B cell (primary cell): ENCODE measurements at regions of chr2 and their contacts with region 1.

Region 1: GRCh38 chr2:25041928-25042320 is at the start of gene EFR3B:
- DNase-seq: peak; percentile 92
- ATAC-seq: peak; percentile 98
- H3K4me3 ChIP-seq: peak within 1 kb of the TSS; percentile 13 to 76 (median 52)
- H3K4me3 Mint-ChIP-seq: peak within 1 kb of the TSS; percentile 91
- H3K27ac ChIP-seq: no peak within 1 kb of the TSS
- H3K27ac Mint-ChIP-seq: no peak within 1 kb of the TSS
- H3K4me1 ChIP-seq: peaks cover 23 to 30% of the 10 kb centered on the region in 2 donors
- H3K4me1 Mint-ChIP-seq: peaks cover 28% of the 10 kb centered on the region
- H3K27me3 ChIP-seq: peaks cover 0 to 44% (median 24%) of the 10 kb centered on the region in 4 experiments
- H3K27me3 Mint-ChIP-seq: peaks cover 47% of the 10 kb centered on the region
- CTCF ChIP-seq: no peak
- total RNA-seq, gene EFR3B: 0.12 and 0.15 TPM in 2 replicates

Region 2: GRCh38 chr2:24490674-24491625 is 551.0 kb before region 1 on chr2 and contains the start of gene NCOA1:
- CTCF ChIA-PET with region 1: no interaction called
- POLR2A ChIA-PET with region 1: no interaction called
- intact Hi-C with region 1: loop called (anchors 5 kb)
- DNase-seq: peak; percentile 92
- ATAC-seq: peak; percentile 80
- H3K4me3 ChIP-seq: peak within 1 kb of the TSS; percentile 65 to 83 (median 67)
- H3K4me3 Mint-ChIP-seq: peak within 1 kb of the TSS; percentile 95
- H3K27ac ChIP-seq: peak within 1 kb of the TSS; percentile 76 to 79
- H3K27ac Mint-ChIP-seq: peak within 1 kb of the TSS; percentile 96
- H3K4me1 ChIP-seq: peaks cover 22 to 23% of the 10 kb centered on the region in 2 donors
- H3K4me1 Mint-ChIP-seq: peaks cover 43% of the 10 kb centered on the region
- H3K27me3 ChIP-seq: no peaks in the 10 kb centered on the region
- H3K27me3 Mint-ChIP-seq: no peaks in the 10 kb centered on the region
- CTCF ChIP-seq: no peak
- total RNA-seq, gene NCOA1: 48.5 and 49.1 TPM in 2 replicates

Region 3: GRCh38 chr2:24792874-24793760 is 248.8 kb before region 1 on chr2 and contains the starts of genes CENPO and PTRHD1:
- CTCF ChIA-PET with region 1: no interaction called
- POLR2A ChIA-PET with region 1: no interaction called
- intact Hi-C with region 1: loop called (anchors 5 kb)
- DNase-seq: peak; percentile 99
- ATAC-seq: peak; percentile 96
- H3K4me3 ChIP-seq: peak within 1 kb of the TSS; percentile 51 to 91 (median 82)
- H3K4me3 Mint-ChIP-seq: peak within 1 kb of the TSS; percentile 99
- H3K27ac ChIP-seq: peak within 1 kb of the TSS; percentile 84 to 87
- H3K27ac Mint-ChIP-seq: peak within 1 kb of the TSS; percentile 100
- H3K4me1 ChIP-seq: peaks cover 10 to 16% of the 10 kb centered on the region in 2 donors
- H3K4me1 Mint-ChIP-seq: peaks cover 19% of the 10 kb centered on the region
- H3K27me3 ChIP-seq: no peaks in the 10 kb centered on the region
- H3K27me3 Mint-ChIP-seq: no peaks in the 10 kb centered on the region
- CTCF ChIP-seq: peak; percentile 68
- total RNA-seq, gene CENPO: 10.4 and 10.8 TPM in 2 replicates
- total RNA-seq, gene PTRHD1: 20.2 and 20.4 TPM in 2 replicates

Region 4: DNA sequence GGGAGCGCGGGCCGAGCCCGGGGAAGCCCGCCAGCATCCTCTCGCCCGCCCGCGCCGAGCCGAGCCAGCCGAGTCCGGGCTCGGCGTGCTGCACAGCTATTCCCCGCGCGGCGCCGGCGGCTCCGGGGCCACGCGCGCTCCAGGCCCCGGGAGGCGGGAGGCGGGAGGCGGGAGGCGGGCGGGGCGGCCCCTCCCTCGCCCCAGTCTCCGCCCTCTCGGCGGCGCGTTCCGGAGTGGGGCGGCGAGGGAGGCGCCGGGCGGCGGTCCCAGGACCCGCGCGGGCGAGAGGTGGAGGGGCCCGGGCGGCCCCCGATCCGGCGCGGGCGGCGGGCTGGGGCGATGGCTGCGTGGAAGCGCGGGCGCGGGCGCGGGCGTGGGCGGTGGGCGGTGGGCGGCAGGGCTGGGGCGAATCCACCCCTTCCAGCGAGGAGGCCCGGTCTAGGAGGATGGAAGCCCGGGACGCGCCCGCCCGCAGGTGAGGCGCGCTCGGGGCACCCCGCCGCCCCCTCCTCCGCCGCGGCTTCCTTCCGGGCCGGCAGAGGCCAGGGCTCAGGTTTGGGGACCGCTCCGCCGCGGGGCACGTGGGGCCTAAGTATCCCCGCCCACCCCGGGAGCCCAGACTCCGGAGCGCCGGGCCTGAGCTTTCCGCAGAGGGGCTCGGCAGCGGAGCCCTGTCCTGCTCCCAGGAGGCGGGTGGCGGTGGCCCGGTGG is 121.7 kb before region 1 on chr2 and contains the start of gene ADCY3:
- CTCF ChIA-PET with region 1: no interaction called
- POLR2A ChIA-PET with region 1: no interaction called
- intact Hi-C with region 1: loop called (anchors 1 kb)
- DNase-seq: peak; percentile 73
- ATAC-seq: peak; percentile 79
- H3K4me3 ChIP-seq: peak within 1 kb of the TSS; percentile 23 to 66 (median 56)
- H3K4me3 Mint-ChIP-seq: peak within 1 kb of the TSS; percentile 94
- H3K27ac ChIP-seq: no peak within 1 kb of the TSS
- H3K27ac Mint-ChIP-seq: peak within 1 kb of the TSS; percentile 79
- H3K4me1 ChIP-seq: peaks cover 10 to 16% of the 10 kb centered on the region in 2 donors
- H3K4me1 Mint-ChIP-seq: peaks cover 23% of the 10 kb centered on the region
- H3K27me3 ChIP-seq: no peaks in the 10 kb centered on the region
- H3K27me3 Mint-ChIP-seq: no peaks in the 10 kb centered on the region
- CTCF ChIP-seq: no peak
- total RNA-seq, gene ADCY3: 48.2 and 48.4 TPM in 2 replicates

Region 5: DNA sequence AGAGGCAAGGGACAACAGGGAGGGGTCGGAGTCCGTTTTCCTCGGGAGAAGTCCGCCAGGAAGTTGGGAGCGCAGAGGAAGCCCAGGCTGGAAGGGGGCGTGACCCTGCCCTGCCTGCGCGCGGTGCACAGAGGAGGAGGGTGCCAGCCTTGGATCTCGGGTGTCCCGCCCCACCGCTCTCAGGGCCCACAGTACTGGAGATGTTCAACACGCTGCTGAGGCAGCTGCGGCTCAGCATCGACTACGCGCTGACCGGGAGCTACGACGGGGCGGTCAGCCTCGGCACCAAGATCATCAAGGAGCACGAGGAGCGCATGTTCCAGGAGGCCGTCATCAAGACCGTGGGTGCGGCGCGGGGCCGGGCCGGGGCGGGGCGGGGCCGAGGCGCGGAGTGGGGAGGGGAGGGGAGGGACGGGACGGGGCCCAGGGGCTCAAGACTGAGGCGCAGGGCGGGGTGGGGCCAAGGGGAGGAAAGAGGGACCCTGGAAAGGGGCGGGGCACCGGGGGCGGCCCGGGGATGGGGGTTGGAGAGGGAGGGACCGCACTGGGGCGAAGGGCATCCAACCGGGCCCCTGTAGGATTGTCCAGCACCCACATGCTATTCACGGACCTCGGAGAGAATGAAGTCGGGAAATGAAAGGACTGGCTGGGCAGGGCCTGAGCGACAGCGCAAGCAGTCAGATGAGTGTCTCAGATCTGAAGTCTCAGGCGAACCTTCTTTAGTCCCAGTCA is 89.8 kb after region 1 on chr2:
- CTCF ChIA-PET with region 1: interaction called, 3 read pairs
- POLR2A ChIA-PET with region 1: no interaction called
- intact Hi-C with region 1: loop called (anchors 5 kb)
- DNase-seq: peak; percentile 42
- ATAC-seq: no peak
- H3K4me3 ChIP-seq: peak overlapping the region in 3 of 5 experiments; percentile 8 to 39 (median 23)
- H3K4me3 Mint-ChIP-seq: peak overlapping the region; percentile 81
- H3K27ac ChIP-seq: no peak overlapping the region
- H3K27ac Mint-ChIP-seq: no peak overlapping the region
- H3K4me1 ChIP-seq: peaks cover 11 to 18% of the 10 kb centered on the region in 2 donors
- H3K4me1 Mint-ChIP-seq: peaks cover 16% of the 10 kb centered on the region
- H3K27me3 ChIP-seq: peaks cover 0 to 41% (median 22%) of the 10 kb centered on the region in 4 experiments
- H3K27me3 Mint-ChIP-seq: peaks cover 53% of the 10 kb centered on the region
- CTCF ChIP-seq: no peak

Region 6: DNA sequence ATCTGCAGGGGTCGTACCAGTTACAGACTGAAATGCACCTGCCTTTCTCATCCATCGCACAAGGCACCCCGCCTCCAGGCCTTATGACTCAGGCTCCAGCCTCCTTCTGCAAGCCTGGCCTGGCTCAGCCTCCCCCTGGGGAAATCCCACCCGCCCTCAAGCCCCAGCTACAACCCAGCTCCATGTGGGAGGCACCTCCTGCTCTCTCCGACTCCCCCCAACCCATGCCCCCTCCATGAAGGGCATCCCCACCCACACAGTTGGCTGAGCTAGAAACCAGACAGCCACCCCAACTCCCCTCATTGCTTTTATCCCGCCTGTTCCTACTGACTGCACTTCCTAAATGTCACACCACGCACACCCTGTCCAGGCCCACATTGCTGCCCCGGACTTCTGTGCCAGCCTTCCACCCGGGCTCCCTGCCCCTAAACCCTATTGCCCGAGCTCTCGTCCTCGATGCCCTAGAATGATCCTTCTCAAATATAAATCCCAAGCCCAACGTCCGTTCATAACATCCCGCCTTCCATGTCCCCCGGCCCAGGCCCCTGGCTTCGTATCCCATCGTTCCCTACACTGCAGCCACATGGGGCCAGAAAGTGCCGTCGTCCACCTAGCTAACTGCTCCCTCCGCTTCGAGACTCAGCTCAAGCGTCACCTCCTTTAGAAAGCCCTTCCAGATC is 289.9 kb after region 1 on chr2:
- CTCF ChIA-PET with region 1: no interaction called
- POLR2A ChIA-PET with region 1: no interaction called
- intact Hi-C with region 1: no loop called
- DNase-seq: no peak
- ATAC-seq: no peak
- H3K4me3 ChIP-seq: no peak overlapping the region
- H3K4me3 Mint-ChIP-seq: no peak overlapping the region
- H3K27ac ChIP-seq: no peak overlapping the region
- H3K27ac Mint-ChIP-seq: no peak overlapping the region
- H3K4me1 ChIP-seq: peaks cover 14 to 21% of the 10 kb centered on the region in 2 donors
- H3K4me1 Mint-ChIP-seq: peaks cover 39% of the 10 kb centered on the region
- H3K27me3 ChIP-seq: peaks cover 0 to 7% (median 1%) of the 10 kb centered on the region in 4 experiments
- H3K27me3 Mint-ChIP-seq: no peaks in the 10 kb centered on the region
- CTCF ChIP-seq: no peak

Region 7: GRCh38 chr2:25673300-25674076 is 631.6 kb after region 1 on chr2 and contains the start of gene DTNB:
- CTCF ChIA-PET with region 1: no interaction called
- POLR2A ChIA-PET with region 1: no interaction called
- intact Hi-C with region 1: loop called (anchors 5 kb)
- DNase-seq: peak; percentile 89
- ATAC-seq: peak; percentile 74
- H3K4me3 ChIP-seq: peak within 1 kb of the TSS; percentile 75 to 85 (median 82)
- H3K4me3 Mint-ChIP-seq: peak within 1 kb of the TSS; percentile 94
- H3K27ac ChIP-seq: peak within 1 kb of the TSS; percentile 59 to 71
- H3K27ac Mint-ChIP-seq: peak within 1 kb of the TSS; percentile 91
- H3K4me1 ChIP-seq: peaks cover 8 to 16% of the 10 kb centered on the region in 2 donors
- H3K4me1 Mint-ChIP-seq: peaks cover 16% of the 10 kb centered on the region
- H3K27me3 ChIP-seq: peaks cover 0 to 2% (median 0%) of the 10 kb centered on the region in 4 experiments
- H3K27me3 Mint-ChIP-seq: no peaks in the 10 kb centered on the region
- CTCF ChIP-seq: no peak
- total RNA-seq, gene DTNB: 37.3 and 45.8 TPM in 2 replicates

Region 8: GRCh38 chr2:25822190-25823117 is 780.5 kb after region 1 on chr2:
- CTCF ChIA-PET with region 1: no interaction called
- POLR2A ChIA-PET with region 1: no interaction called
- intact Hi-C with region 1: no loop called
- DNase-seq: peak; percentile 76
- ATAC-seq: peak; percentile 93
- H3K4me3 ChIP-seq: peak overlapping the region in 4 of 5 experiments; percentile 13 to 46 (median 30)
- H3K4me3 Mint-ChIP-seq: peak overlapping the region; percentile 75
- H3K27ac ChIP-seq: peak overlapping the region in 1 of 2 donors; percentile 35
- H3K27ac Mint-ChIP-seq: peak overlapping the region; percentile 27
- H3K4me1 ChIP-seq: peaks cover 6 to 7% of the 10 kb centered on the region in 2 donors
- H3K4me1 Mint-ChIP-seq: peaks cover 47% of the 10 kb centered on the region
- H3K27me3 ChIP-seq: no peaks in the 10 kb centered on the region
- H3K27me3 Mint-ChIP-seq: no peaks in the 10 kb centered on the region
- CTCF ChIP-seq: no peak